ENCODE measurements at regions of chr6 and their contacts with region 1.

Region 1: DNA sequence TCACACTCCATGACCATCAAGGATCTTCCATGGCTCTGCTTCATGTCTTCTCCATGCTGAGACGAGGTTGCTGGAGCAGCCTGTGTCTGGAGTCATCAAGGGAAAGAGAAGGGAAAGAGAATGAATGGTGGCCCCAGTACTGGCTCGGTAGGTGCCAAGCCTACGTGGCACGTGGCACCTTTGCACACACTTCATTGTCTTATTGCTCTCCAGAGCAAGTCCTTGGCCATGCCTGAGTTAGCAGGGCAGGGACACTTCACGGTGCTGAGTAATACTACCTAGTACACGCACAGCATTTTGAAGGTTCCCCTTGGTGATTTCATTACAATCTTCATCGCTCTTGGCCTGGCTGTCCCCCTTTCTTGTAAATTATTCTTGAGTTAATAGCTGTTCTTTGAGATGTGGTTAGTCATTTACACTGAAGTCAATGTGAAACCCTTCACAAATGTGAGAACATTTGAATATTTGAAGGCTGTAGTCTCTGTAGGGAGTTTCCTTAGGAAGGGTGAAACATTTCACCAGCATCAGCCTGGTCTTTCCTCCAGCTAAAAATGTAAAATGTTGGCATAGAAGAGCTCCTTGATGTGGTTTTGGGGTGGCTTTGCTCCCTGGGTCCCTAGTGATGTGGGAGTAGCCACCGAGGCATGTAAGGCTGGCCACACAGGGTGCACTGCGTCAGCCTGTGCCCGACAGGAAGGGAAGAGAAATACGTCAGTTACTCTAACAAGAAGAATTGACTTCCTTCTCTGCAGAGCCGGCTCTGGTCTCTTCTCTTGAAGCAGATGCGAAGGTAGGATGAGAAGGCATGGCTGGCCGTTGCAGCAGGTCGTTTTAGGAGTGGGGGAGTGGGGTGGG is at the start of gene SYTL3:
- DNase-seq: peak; percentile 82
- H3K4me3 Mint-ChIP-seq: peak within 1 kb of the TSS; percentile 87
- H3K27ac Mint-ChIP-seq: peak within 1 kb of the TSS; percentile 93
- H3K4me1 Mint-ChIP-seq: peaks cover 74% of the 10 kb centered on the region
- H3K27me3 Mint-ChIP-seq: no peaks in the 10 kb centered on the region
- total RNA-seq, gene SYTL3: 123 and 139 TPM in 2 replicates

Region 2: GRCh38 chr6:158559895-158560835 is 89.4 kb before region 1 on chr6 and contains the start of gene TMEM181:
- intact Hi-C with region 1: loop called (anchors 2 kb)
- DNase-seq: peak; percentile 84
- H3K4me3 Mint-ChIP-seq: peak within 1 kb of the TSS; percentile 97
- H3K27ac Mint-ChIP-seq: peak within 1 kb of the TSS; percentile 95
- H3K4me1 Mint-ChIP-seq: peaks cover 32% of the 10 kb centered on the region
- H3K27me3 Mint-ChIP-seq: peaks cover 3% of the 10 kb centered on the region
- total RNA-seq, gene TMEM181: 17.0 and 17.7 TPM in 2 replicates

Region 3: GRCh38 chr6:158803733-158804143 is 154.2 kb after region 1 on chr6:
- intact Hi-C with region 1: loop called (anchors 5 kb)
- DNase-seq: peak; percentile 38
- H3K4me3 Mint-ChIP-seq: peak overlapping the region; percentile 72
- H3K27ac Mint-ChIP-seq: peak overlapping the region; percentile 89
- H3K4me1 Mint-ChIP-seq: peaks cover 88% of the 10 kb centered on the region
- H3K27me3 Mint-ChIP-seq: no peaks in the 10 kb centered on the region

Region 4: DNA sequence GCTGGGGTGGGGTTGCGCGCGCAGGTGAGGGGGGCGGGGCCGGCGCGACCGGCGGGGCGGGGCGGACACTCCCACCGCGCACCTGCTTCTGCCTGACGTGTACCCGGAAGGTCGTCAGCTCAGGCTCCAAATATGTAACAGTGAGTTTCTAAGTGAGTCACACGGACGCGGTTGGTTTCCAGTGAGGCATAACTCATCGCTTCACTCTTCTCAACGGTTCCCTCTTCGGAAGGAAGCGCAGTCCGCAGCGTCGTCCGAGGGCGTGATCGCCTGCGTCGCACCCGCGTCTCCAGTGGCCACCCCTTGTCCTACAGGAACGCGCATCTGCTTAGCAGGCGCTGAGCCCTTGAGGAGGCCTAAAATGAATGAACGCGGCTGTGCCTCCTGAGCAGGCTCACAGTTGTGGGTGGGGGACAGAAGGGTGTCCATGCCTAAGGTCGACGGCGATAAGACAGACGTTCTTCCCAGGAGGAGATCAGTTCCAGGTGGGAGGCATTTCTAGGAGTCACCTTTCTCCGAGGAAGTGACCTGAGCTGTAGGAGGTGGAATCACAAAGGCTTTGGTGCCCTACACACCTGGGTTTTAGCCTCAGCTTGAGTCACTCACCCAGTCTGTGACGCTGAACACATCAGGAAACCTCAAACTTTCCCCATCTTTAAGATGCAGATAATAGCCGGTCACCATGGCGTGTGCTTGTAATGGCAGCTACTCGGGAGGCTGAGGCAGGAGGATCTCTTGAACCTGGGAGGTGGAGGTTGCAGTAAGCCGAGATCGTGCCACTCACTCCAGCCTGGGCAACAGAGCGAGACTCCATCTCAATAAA is 220.5 kb after region 1 on chr6:
- intact Hi-C with region 1: loop called (anchors 2 kb)
- DNase-seq: peak; percentile 94
- H3K4me3 Mint-ChIP-seq: peak overlapping the region; percentile 87
- H3K27ac Mint-ChIP-seq: peak overlapping the region; percentile 99
- H3K4me1 Mint-ChIP-seq: peaks cover 37% of the 10 kb centered on the region
- H3K27me3 Mint-ChIP-seq: peaks cover 5% of the 10 kb centered on the region

Region 5: GRCh38 chr6:159098636-159099106 is 449.2 kb after region 1 on chr6:
- intact Hi-C with region 1: loop called (anchors 2 kb)
- DNase-seq: peak; percentile 67
- H3K4me3 Mint-ChIP-seq: peak overlapping the region; percentile 76
- H3K27ac Mint-ChIP-seq: peak overlapping the region; percentile 96
- H3K4me1 Mint-ChIP-seq: peaks cover 88% of the 10 kb centered on the region
- H3K27me3 Mint-ChIP-seq: no peaks in the 10 kb centered on the region